ENCODE measurements at regions of chr17 and their contacts with region 1.

Region 1: GRCh38 chr17:18314731-18315561 is at the starts of genes SMCR8 and TOP3A:
- DNase-seq: peak; percentile 85 to 93
- H3K4me3 ChIP-seq: peak within 1 kb of the TSS; percentile 83 to 92 (median 86)
- H3K27ac ChIP-seq: peak within 1 kb of the TSS; percentile 84
- H3K4me1 ChIP-seq: peaks cover 0 to 12% (median 4%) of the 10 kb centered on the region in 4 experiments; a peak in 5 of 7 replicates
- H3K27me3 ChIP-seq: no peaks in the 10 kb centered on the region
- CTCF ChIP-seq: no peak
- EP300 ChIP-seq: peak in 1 of 2 experiments; percentile 61; a peak in 1 of 3 replicates
- POLR2A ChIP-seq: peak; percentile 50 to 62
- RAD21 ChIP-seq: no peak; a peak in 1 of 4 replicates
- total RNA-seq, gene SMCR8: 18.5 and 19.0 TPM in 2 replicates
- total RNA-seq, gene TOP3A: 46.2 and 54.3 TPM in 2 replicates

Region 2: GRCh38 chr17:18254888-18255649 is 59.9 kb before region 1 on chr17:
- CTCF ChIA-PET with region 1: interaction called, 19 read pairs
- POLR2A ChIA-PET with region 1: interaction called, 7 read pairs
- DNase-seq: no peak
- H3K4me3 ChIP-seq: no peak overlapping the region
- H3K27ac ChIP-seq: no peak overlapping the region
- H3K4me1 ChIP-seq: peaks cover 4 to 26% (median 14%) of the 10 kb centered on the region in 4 experiments
- H3K27me3 ChIP-seq: no peaks in the 10 kb centered on the region
- CTCF ChIP-seq: peak in 2 of 3 experiments; percentile 18 to 35; a peak in 2 of 4 replicates
- EP300 ChIP-seq: no peak
- POLR2A ChIP-seq: no peak
- RAD21 ChIP-seq: peak; percentile 26 to 50; a peak in 3 of 4 replicates

Region 3: GRCh38 chr17:18267927-18268711 is 46.8 kb before region 1 on chr17:
- CTCF ChIA-PET with region 1: no interaction called
- POLR2A ChIA-PET with region 1: interaction called, 15 read pairs
- DNase-seq: no peak
- H3K4me3 ChIP-seq: no peak overlapping the region
- H3K27ac ChIP-seq: no peak overlapping the region
- H3K4me1 ChIP-seq: peaks cover 0 to 10% (median 2%) of the 10 kb centered on the region in 4 experiments; a peak in 4 of 7 replicates
- H3K27me3 ChIP-seq: no peaks in the 10 kb centered on the region
- CTCF ChIP-seq: no peak
- EP300 ChIP-seq: no peak
- POLR2A ChIP-seq: no peak; a peak in 1 of 3 replicates
- RAD21 ChIP-seq: no peak

Region 4: GRCh38 chr17:18332909-18333489 is 18.1 kb after region 1 on chr17:
- CTCF ChIA-PET with region 1: interaction called, 58 read pairs
- POLR2A ChIA-PET with region 1: interaction called, 52 read pairs
- DNase-seq: no peak
- H3K4me3 ChIP-seq: no peak overlapping the region
- H3K27ac ChIP-seq: no peak overlapping the region
- H3K4me1 ChIP-seq: no peaks in the 10 kb centered on the region
- H3K27me3 ChIP-seq: no peaks in the 10 kb centered on the region
- CTCF ChIP-seq: no peak
- EP300 ChIP-seq: no peak
- POLR2A ChIP-seq: no peak
- RAD21 ChIP-seq: no peak

Region 5: DNA sequence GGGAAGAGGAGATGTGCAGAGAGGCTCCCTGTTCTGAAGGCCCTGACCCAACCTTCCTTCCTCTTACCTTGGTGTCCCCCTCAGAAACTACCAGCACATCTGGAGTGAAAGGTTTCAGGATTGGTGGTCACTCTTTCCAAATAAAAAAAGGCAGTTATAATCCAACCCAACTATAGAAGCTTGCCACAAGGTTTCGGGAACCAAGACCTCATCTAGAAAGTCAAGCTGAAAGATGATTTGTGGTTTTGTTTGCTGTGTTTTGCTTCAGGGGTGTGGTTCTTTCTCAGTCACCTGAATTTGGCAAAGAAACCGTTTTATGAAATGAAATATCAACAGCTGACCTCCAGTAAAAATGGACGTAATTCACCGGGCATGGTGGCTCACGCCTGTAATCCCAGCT is 29.1 kb after region 1 on chr17:
- CTCF ChIA-PET with region 1: interaction called, 26 read pairs
- POLR2A ChIA-PET with region 1: interaction called, 4 read pairs
- DNase-seq: no peak
- H3K4me3 ChIP-seq: no peak overlapping the region
- H3K27ac ChIP-seq: no peak overlapping the region
- H3K4me1 ChIP-seq: no peaks in the 10 kb centered on the region
- H3K27me3 ChIP-seq: no peaks in the 10 kb centered on the region
- CTCF ChIP-seq: no peak
- EP300 ChIP-seq: no peak
- POLR2A ChIP-seq: no peak
- RAD21 ChIP-seq: no peak